ENCODE measurements at regions of chr20 and their contacts with region 1.

Region 1: GRCh38 chr20:39568109-39568508 is 606.0 kb downstream of the DHX35 start:
- DNase-seq: no peak
- H3K4me3 ChIP-seq: no peak overlapping the region
- H3K27ac ChIP-seq: no peak overlapping the region
- H3K27me3 ChIP-seq: peaks cover 0 to 3% (median 0%) of the 10 kb centered on the region in 45 donors
- CTCF ChIP-seq: no peak

Region 2: DNA sequence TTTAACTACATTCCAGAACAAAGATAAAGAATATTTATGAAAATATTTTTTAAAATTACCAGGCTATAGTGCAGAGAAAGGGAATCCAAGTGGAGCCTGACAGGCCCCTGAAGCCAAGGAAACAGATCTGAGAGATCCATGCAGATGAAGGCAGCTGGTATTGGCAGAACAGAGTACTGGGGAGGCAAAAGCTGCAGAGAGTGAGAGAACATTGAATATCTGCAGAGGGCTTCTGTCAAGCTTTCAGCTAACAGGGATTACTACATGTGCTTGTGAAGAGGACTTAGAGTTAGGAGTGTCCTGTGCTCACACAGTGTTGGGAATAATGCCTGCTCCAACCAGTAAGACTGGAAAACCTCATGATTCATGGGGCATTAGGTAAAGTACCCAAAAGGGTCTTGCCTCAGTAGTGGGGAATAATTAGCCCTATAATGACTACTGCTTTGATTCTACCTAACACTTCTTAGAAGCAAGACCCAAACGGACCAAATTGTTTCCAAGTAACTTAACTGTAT is 51.2 kb after region 1 on chr20:
- intact Hi-C with region 1: loop called in 1 of 2 experiments (anchors 10 kb)
- DNase-seq: no peak
- H3K4me3 ChIP-seq: no peak overlapping the region
- H3K27ac ChIP-seq: no peak overlapping the region
- H3K27me3 ChIP-seq: peaks cover 0 to 5% (median 0%) of the 10 kb centered on the region in 45 donors
- CTCF ChIP-seq: no peak

Measured in dorsolateral prefrontal cortex (tissue), 120 donors.